T-cell (primary cell): ENCODE measurements at regions of chr1 and their contacts with region 1.

Region 1: DNA sequence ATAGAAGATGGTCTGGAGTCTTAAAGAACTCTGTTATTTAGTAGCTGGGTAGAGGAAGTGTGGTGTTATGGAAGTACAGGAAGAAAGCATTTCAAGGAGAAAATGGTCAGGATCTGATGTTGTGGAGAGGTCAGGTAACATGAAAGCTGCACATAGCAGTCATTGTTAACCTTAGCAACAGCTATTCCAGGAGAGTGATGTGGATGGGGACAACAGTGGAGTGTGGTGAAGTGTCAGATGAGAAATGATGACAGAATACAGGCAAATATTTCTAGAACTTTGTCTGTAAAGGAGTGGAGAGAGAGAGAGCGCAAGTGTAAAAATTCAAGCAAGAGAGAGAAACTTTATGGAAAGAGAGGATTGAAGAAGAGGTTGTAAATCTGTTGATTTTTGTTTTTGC is 15.6 kb downstream of the TLCD4 start:
- DNase-seq: no peak
- ATAC-seq: no peak
- H3K4me3 ChIP-seq: no peak overlapping the region
- H3K4me3 Mint-ChIP-seq: no peak overlapping the region
- H3K27ac ChIP-seq: no peak overlapping the region
- H3K27ac Mint-ChIP-seq: no peak overlapping the region
- H3K4me1 ChIP-seq: no peaks in the 10 kb centered on the region
- H3K4me1 Mint-ChIP-seq: no peaks in the 10 kb centered on the region
- H3K27me3 ChIP-seq: peaks cover 0 to 9% of the 10 kb centered on the region in 2 experiments
- H3K27me3 Mint-ChIP-seq: peaks cover 10 to 14% of the 10 kb centered on the region in 2 donors

Region 2: DNA sequence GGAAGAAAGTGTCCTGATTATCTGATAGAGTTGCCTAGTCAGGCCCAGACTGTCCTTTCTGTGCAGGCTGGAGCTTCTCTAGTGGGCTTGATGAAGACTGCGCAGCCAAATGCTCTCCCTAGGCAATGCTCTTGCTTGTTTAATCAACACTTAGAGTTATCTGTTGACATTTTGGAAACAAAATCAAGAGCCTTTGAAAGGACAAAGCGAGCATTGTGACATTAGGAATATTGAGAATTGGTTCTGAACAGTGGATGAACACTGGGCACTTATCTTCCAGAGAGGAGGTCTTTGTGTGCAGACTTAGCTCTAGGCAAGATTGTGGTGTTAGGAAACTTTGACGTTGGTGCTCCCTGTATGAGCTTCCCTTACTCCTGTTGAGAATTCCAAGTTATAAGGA is 1348.2 kb before region 1 on chr1:
- CTCF ChIA-PET with region 1: no interaction called
- POLR2A ChIA-PET with region 1: interaction called in 1 of 2 experiments, 12 read pairs
- DNase-seq: no peak
- ATAC-seq: no peak
- H3K4me3 ChIP-seq: no peak overlapping the region
- H3K4me3 Mint-ChIP-seq: no peak overlapping the region
- H3K27ac ChIP-seq: no peak overlapping the region
- H3K27ac Mint-ChIP-seq: no peak overlapping the region
- H3K4me1 ChIP-seq: no peaks in the 10 kb centered on the region
- H3K4me1 Mint-ChIP-seq: no peaks in the 10 kb centered on the region
- H3K27me3 ChIP-seq: no peaks in the 10 kb centered on the region
- H3K27me3 Mint-ChIP-seq: peaks cover 0 to 6% of the 10 kb centered on the region in 2 donors

Region 3: GRCh38 chr1:94743862-94744261 is 388.9 kb before region 1 on chr1:
- CTCF ChIA-PET with region 1: no interaction called
- POLR2A ChIA-PET with region 1: no interaction called
- DNase-seq: no peak
- ATAC-seq: no peak
- H3K4me3 ChIP-seq: no peak overlapping the region
- H3K4me3 Mint-ChIP-seq: no peak overlapping the region
- H3K27ac ChIP-seq: no peak overlapping the region
- H3K27ac Mint-ChIP-seq: no peak overlapping the region
- H3K4me1 ChIP-seq: no peaks in the 10 kb centered on the region
- H3K4me1 Mint-ChIP-seq: peaks cover 0 to 3% (median 2%) of the 10 kb centered on the region in 3 donors
- H3K27me3 ChIP-seq: peaks cover 0 to 6% of the 10 kb centered on the region in 2 experiments
- H3K27me3 Mint-ChIP-seq: peaks cover 15% of the 10 kb centered on the region in 2 donors

Region 4: GRCh38 chr1:94936861-94937620 is 195.7 kb before region 1 on chr1:
- CTCF ChIA-PET with region 1: no interaction called
- POLR2A ChIA-PET with region 1: no interaction called
- DNase-seq: no peak
- ATAC-seq: no peak
- H3K4me3 ChIP-seq: no peak overlapping the region
- H3K4me3 Mint-ChIP-seq: no peak overlapping the region
- H3K27ac ChIP-seq: no peak overlapping the region
- H3K27ac Mint-ChIP-seq: no peak overlapping the region
- H3K4me1 ChIP-seq: no peaks in the 10 kb centered on the region
- H3K4me1 Mint-ChIP-seq: peaks cover 2 to 15% (median 3%) of the 10 kb centered on the region in 3 donors
- H3K27me3 ChIP-seq: peaks cover 0 to 3% of the 10 kb centered on the region in 2 experiments
- H3K27me3 Mint-ChIP-seq: peaks cover 4 to 10% of the 10 kb centered on the region in 2 donors

Region 5: GRCh38 chr1:95223110-95223509 is 90.3 kb after region 1 on chr1:
- CTCF ChIA-PET with region 1: no interaction called
- POLR2A ChIA-PET with region 1: no interaction called
- DNase-seq: no peak
- ATAC-seq: no peak
- H3K4me3 ChIP-seq: no peak overlapping the region
- H3K4me3 Mint-ChIP-seq: no peak overlapping the region
- H3K27ac ChIP-seq: no peak overlapping the region
- H3K27ac Mint-ChIP-seq: no peak overlapping the region
- H3K4me1 ChIP-seq: no peaks in the 10 kb centered on the region
- H3K4me1 Mint-ChIP-seq: no peaks in the 10 kb centered on the region
- H3K27me3 ChIP-seq: peaks cover 0 to 3% of the 10 kb centered on the region in 2 experiments
- H3K27me3 Mint-ChIP-seq: peaks cover 16 to 27% of the 10 kb centered on the region in 2 donors